Naive thymus-derived CD4-positive, alpha-beta T cell (primary cell): ENCODE measurements at regions of chr6 and their contacts with region 1.

Region 1: GRCh38 chr6:33570806-33571636 is 9.1 kb downstream of the BAK1 start:
- DNase-seq: peak; percentile 81 to 98 (median 95)
- ATAC-seq: peak; percentile 91
- H3K4me3 ChIP-seq: peak overlapping the region; percentile 85
- H3K4me3 Mint-ChIP-seq: peak overlapping the region; percentile 80 to 99 (median 94)
- H3K27ac ChIP-seq: peak overlapping the region; percentile 98
- H3K27ac Mint-ChIP-seq: peak overlapping the region; percentile 99 to 100 (median 100)
- H3K4me1 ChIP-seq: peaks cover 19 to 21% of the 10 kb centered on the region in 2 donors
- H3K4me1 Mint-ChIP-seq: peaks cover 8 to 57% (median 31%) of the 10 kb centered on the region in 7 donors
- H3K27me3 ChIP-seq: no peaks in the 10 kb centered on the region
- H3K27me3 Mint-ChIP-seq: peaks cover 0 to 3% (median 0%) of the 10 kb centered on the region in 5 donors

Region 2: GRCh38 chr6:33271458-33272274 is 299.4 kb before region 1 on chr6 and contains the starts of genes RPS18 and VPS52:
- CTCF ChIA-PET with region 1: no interaction called
- POLR2A ChIA-PET with region 1: no interaction called
- intact Hi-C with region 1: loop called (anchors 2 to 5 kb)
- DNase-seq: peak; percentile 84 to 97 (median 93)
- ATAC-seq: peak; percentile 91
- H3K4me3 ChIP-seq: peak within 1 kb of the TSS; percentile 93
- H3K4me3 Mint-ChIP-seq: peak within 1 kb of the TSS; percentile 87 to 100 (median 98)
- H3K27ac ChIP-seq: peak within 1 kb of the TSS; percentile 91
- H3K27ac Mint-ChIP-seq: peak within 1 kb of the TSS; percentile 95 to 100 (median 99)
- H3K4me1 ChIP-seq: peaks cover 41 to 44% of the 10 kb centered on the region in 2 donors
- H3K4me1 Mint-ChIP-seq: peaks cover 34 to 81% (median 66%) of the 10 kb centered on the region in 7 donors
- H3K27me3 ChIP-seq: no peaks in the 10 kb centered on the region
- H3K27me3 Mint-ChIP-seq: peaks cover 0 to 3% (median 0%) of the 10 kb centered on the region in 5 donors
- total RNA-seq, gene RPS18: 2,454 to 4,896 (median 3,431) TPM
- total RNA-seq, gene VPS52: 74.3 to 110 (median 90.5) TPM

Region 3: GRCh38 chr6:33317669-33318425 is 253.2 kb before region 1 on chr6 and contains the start of gene ZBTB22:
- CTCF ChIA-PET with region 1: no interaction called
- POLR2A ChIA-PET with region 1: interaction called, 4 read pairs
- intact Hi-C with region 1: loop called in 1 of 2 experiments (anchors 2 kb)
- DNase-seq: peak; percentile 87 to 97 (median 96)
- ATAC-seq: peak; percentile 73
- H3K4me3 ChIP-seq: peak within 1 kb of the TSS; percentile 97
- H3K4me3 Mint-ChIP-seq: peak within 1 kb of the TSS; percentile 81 to 100 (median 100)
- H3K27ac ChIP-seq: peak within 1 kb of the TSS; percentile 99
- H3K27ac Mint-ChIP-seq: peak within 1 kb of the TSS; percentile 97 to 99 (median 98)
- H3K4me1 ChIP-seq: peaks cover 59 to 62% of the 10 kb centered on the region in 2 donors
- H3K4me1 Mint-ChIP-seq: peaks cover 53 to 85% (median 75%) of the 10 kb centered on the region in 7 donors
- H3K27me3 ChIP-seq: no peaks in the 10 kb centered on the region
- H3K27me3 Mint-ChIP-seq: peaks cover 0 to 2% (median 0%) of the 10 kb centered on the region in 5 donors
- total RNA-seq, gene ZBTB22: 15.5 to 30.1 (median 20.5) TPM

Region 4: GRCh38 chr6:33425668-33426577 is 145.1 kb before region 1 on chr6:
- CTCF ChIA-PET with region 1: no interaction called
- POLR2A ChIA-PET with region 1: interaction called, 13 read pairs
- intact Hi-C with region 1: loop called (anchors 1 kb)
- DNase-seq: peak; percentile 57 to 85 (median 74)
- ATAC-seq: peak; percentile 72
- H3K4me3 ChIP-seq: peak overlapping the region; percentile 73
- H3K4me3 Mint-ChIP-seq: peak overlapping the region; percentile 84 to 98 (median 95)
- H3K27ac ChIP-seq: peak overlapping the region; percentile 88
- H3K27ac Mint-ChIP-seq: peak overlapping the region; percentile 88 to 99 (median 95)
- H3K4me1 ChIP-seq: peaks cover 43 to 46% of the 10 kb centered on the region in 2 donors
- H3K4me1 Mint-ChIP-seq: peaks cover 64 to 89% (median 82%) of the 10 kb centered on the region in 7 donors
- H3K27me3 ChIP-seq: no peaks in the 10 kb centered on the region
- H3K27me3 Mint-ChIP-seq: no peaks in the 10 kb centered on the region

Region 5: GRCh38 chr6:33490209-33490608 is 80.8 kb before region 1 on chr6:
- CTCF ChIA-PET with region 1: no interaction called
- POLR2A ChIA-PET with region 1: no interaction called
- intact Hi-C with region 1: no loop called
- DNase-seq: no peak
- ATAC-seq: no peak
- H3K4me3 ChIP-seq: no peak overlapping the region
- H3K4me3 Mint-ChIP-seq: no peak overlapping the region
- H3K27ac ChIP-seq: no peak overlapping the region
- H3K27ac Mint-ChIP-seq: peak overlapping the region in 1 of 9 donors; percentile 31
- H3K4me1 ChIP-seq: no peaks in the 10 kb centered on the region
- H3K4me1 Mint-ChIP-seq: peaks cover 0 to 4% (median 0%) of the 10 kb centered on the region in 7 donors
- H3K27me3 ChIP-seq: no peaks in the 10 kb centered on the region
- H3K27me3 Mint-ChIP-seq: peaks cover 0 to 24% (median 5%) of the 10 kb centered on the region in 5 donors

Region 6: DNA sequence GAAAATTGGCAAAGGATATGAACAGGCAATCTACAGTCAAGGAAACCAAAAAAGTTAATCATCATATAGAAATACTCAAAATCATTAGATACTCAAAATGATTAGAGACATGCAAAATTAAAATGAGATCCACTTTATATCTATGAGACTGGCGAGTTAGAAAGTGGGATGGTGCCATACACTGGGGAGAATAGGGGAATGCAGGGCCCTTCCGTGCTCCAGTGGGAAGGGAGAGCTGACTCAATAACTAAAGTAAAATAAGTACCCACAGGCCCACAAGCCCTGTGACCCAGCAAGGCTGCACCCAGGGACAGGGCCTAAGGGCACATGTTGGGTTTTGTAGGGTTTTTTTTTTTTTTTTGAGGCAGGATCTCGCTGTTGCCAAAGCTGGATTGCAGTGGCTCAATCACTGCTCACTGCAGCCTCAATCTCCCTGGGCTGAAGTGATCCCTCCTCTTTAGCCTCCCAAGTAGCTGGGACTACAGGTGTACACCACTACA is 35.9 kb before region 1 on chr6:
- CTCF ChIA-PET with region 1: interaction called, 3 read pairs
- POLR2A ChIA-PET with region 1: interaction called, 14 read pairs
- intact Hi-C with region 1: loop called (anchors 1 kb)
- DNase-seq: no peak
- ATAC-seq: no peak
- H3K4me3 ChIP-seq: no peak overlapping the region
- H3K4me3 Mint-ChIP-seq: no peak overlapping the region
- H3K27ac ChIP-seq: no peak overlapping the region
- H3K27ac Mint-ChIP-seq: peak overlapping the region in 3 of 9 donors; percentile 9 to 74 (median 50)
- H3K4me1 ChIP-seq: peaks cover 0 to 10% of the 10 kb centered on the region in 2 donors
- H3K4me1 Mint-ChIP-seq: peaks cover 9 to 32% (median 27%) of the 10 kb centered on the region in 7 donors
- H3K27me3 ChIP-seq: no peaks in the 10 kb centered on the region
- H3K27me3 Mint-ChIP-seq: peaks cover 0 to 2% (median 0%) of the 10 kb centered on the region in 5 donors

Region 7: DNA sequence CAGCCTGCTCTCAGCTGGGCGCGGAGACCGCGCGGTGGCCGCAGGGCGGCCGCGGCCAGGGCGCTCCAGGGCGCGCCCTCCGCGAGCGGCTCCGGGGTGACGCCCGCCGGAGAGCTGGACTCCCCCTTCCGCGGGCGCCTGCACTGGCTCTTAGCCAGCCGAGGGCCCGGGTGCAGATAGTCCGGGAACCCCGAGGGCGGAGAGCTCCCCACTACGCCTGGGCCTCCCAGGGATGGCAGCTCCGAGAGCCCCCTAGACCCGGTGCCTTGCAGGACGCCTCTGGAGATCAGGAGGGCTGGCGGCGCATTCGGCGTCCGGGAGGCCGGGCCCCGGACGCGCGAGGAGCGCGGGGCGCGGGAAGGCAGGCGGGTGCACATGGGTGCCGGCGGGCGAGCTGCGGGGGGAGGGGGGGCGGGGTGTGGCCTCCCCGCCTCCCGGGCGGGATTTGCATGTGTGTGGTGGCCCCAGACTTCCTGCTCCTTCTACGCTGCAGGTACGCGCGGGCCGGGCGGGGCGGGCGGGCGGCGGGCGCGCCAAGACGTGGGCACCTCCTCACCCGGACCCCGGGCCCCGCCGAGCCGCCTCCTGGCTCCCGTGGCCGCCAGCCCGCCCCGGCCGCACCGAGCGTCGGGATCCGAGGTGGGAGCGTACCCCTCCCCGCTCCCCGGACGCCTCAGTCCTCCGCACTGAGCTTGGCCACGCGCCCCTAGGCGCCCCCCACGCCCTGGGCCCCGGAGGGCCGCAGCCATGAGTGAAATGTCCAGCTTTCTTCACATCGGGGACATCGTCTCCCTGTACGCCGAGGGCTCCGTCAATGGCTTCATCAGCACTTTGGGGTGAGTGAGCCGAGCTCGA is 50.1 kb after region 1 on chr6 and contains the start of gene ITPR3:
- CTCF ChIA-PET with region 1: no interaction called
- POLR2A ChIA-PET with region 1: interaction called, 10 read pairs
- intact Hi-C with region 1: loop called in 1 of 2 experiments (anchors 2 kb)
- DNase-seq: peak; percentile 63 to 83 (median 80)
- ATAC-seq: peak; percentile 94
- H3K4me3 ChIP-seq: peak within 1 kb of the TSS; percentile 80
- H3K4me3 Mint-ChIP-seq: peak within 1 kb of the TSS; percentile 91 to 97 (median 96)
- H3K27ac ChIP-seq: peak within 1 kb of the TSS; percentile 97
- H3K27ac Mint-ChIP-seq: peak within 1 kb of the TSS; percentile 82 to 96 (median 94)
- H3K4me1 ChIP-seq: peaks cover 9 to 35% of the 10 kb centered on the region in 2 donors
- H3K4me1 Mint-ChIP-seq: peaks cover 29 to 74% (median 66%) of the 10 kb centered on the region in 7 donors
- H3K27me3 ChIP-seq: no peaks in the 10 kb centered on the region
- H3K27me3 Mint-ChIP-seq: peaks cover 0 to 2% (median 0%) of the 10 kb centered on the region in 5 donors
- total RNA-seq, gene ITPR3: 35.6 to 65.7 (median 47.7) TPM

Region 8: GRCh38 chr6:33843131-33844121 is 272.4 kb after region 1 on chr6:
- CTCF ChIA-PET with region 1: no interaction called
- POLR2A ChIA-PET with region 1: no interaction called
- intact Hi-C with region 1: no loop called
- DNase-seq: no peak
- ATAC-seq: no peak
- H3K4me3 ChIP-seq: no peak overlapping the region
- H3K4me3 Mint-ChIP-seq: no peak overlapping the region
- H3K27ac ChIP-seq: no peak overlapping the region
- H3K27ac Mint-ChIP-seq: no peak overlapping the region
- H3K4me1 ChIP-seq: peaks cover 0 to 13% of the 10 kb centered on the region in 2 donors
- H3K4me1 Mint-ChIP-seq: peaks cover 8 to 25% (median 12%) of the 10 kb centered on the region in 7 donors
- H3K27me3 ChIP-seq: no peaks in the 10 kb centered on the region
- H3K27me3 Mint-ChIP-seq: peaks cover 0 to 8% (median 0%) of the 10 kb centered on the region in 5 donors